CD4-positive, alpha-beta T cell (primary cell): ENCODE measurements at regions of chr11 and their contacts with region 1.

Region 1: DNA sequence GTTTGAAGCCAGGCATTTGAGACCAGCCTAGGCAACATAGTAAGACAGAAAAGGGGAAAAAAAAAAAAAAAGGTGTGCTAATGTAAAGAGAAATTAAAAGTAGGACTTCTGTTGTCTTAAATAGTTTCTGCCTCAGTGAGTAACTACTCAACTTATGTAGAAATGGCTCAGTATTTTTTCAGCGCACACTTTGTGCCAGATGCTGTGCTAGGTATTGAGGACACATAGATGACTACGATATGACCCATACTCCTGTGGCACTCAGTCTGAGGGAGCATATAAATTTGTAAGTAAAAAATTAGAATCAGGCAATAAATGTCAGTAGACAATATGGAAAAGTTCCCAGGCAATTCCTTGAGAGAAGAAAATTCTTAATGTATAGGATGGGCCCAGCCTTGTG is 93.9 kb downstream of the YAP1 start:
- DNase-seq: no peak
- ATAC-seq: no peak
- H3K4me3 ChIP-seq: no peak overlapping the region
- H3K4me3 Mint-ChIP-seq: no peak overlapping the region
- H3K27ac ChIP-seq: no peak overlapping the region
- H3K27ac Mint-ChIP-seq: no peak overlapping the region
- H3K4me1 ChIP-seq: no peaks in the 10 kb centered on the region
- H3K4me1 Mint-ChIP-seq: no peaks in the 10 kb centered on the region
- H3K27me3 ChIP-seq: peaks cover 0 to 7% of the 10 kb centered on the region in 2 experiments
- H3K27me3 Mint-ChIP-seq: peaks cover 22% of the 10 kb centered on the region
- CTCF ChIP-seq: no peak

Region 2: GRCh38 chr11:102216433-102217075 is 12.4 kb after region 1 on chr11:
- CTCF ChIA-PET with region 1: no interaction called
- POLR2A ChIA-PET with region 1: no interaction called
- intact Hi-C with region 1: loop called in 1 of 2 experiments (anchors 1 kb)
- DNase-seq: no peak
- ATAC-seq: no peak
- H3K4me3 ChIP-seq: no peak overlapping the region
- H3K4me3 Mint-ChIP-seq: no peak overlapping the region
- H3K27ac ChIP-seq: no peak overlapping the region
- H3K27ac Mint-ChIP-seq: no peak overlapping the region
- H3K4me1 ChIP-seq: no peaks in the 10 kb centered on the region
- H3K4me1 Mint-ChIP-seq: no peaks in the 10 kb centered on the region
- H3K27me3 ChIP-seq: peaks cover 3 to 6% of the 10 kb centered on the region in 2 experiments
- H3K27me3 Mint-ChIP-seq: peaks cover 38% of the 10 kb centered on the region
- CTCF ChIP-seq: no peak